Activated CD8-positive, alpha-beta T cell treated with anti-CD3 and anti-CD28 coated beads for 36 hours (primary cell): ENCODE measurements at regions of chr11 and their contacts with region 1.

Region 1: DNA sequence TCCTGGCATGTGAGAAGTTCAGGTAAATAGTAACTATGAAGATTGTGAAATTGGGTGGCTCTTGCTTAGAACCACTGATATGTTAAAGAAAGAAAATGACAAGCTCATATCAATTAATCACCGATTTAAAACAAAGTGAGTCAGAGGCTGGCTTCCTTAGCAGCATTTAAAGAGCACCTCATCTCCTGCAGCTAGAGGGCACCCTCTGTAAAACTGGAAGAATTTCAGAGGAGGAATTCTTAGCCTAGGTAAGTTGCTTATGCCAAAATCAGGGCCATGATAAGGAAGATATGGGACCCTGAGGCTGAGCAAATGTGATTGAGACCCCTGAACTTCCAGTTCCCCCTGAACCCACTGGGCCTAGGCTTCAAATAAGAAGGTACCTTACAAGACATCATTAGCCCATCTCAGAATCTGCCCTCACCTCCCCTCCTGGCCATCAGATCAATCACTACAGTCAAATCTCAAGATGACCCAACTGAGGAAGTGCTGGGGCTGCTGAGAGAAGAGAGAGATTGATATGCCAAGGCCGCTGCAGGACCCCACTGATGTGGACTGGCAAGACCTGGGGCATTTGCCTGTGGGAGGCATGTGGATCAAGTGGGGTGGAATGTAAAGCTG is 8.6 kb upstream of the CD3E start:
- DNase-seq: peak; percentile 70
- ATAC-seq: peak; percentile 77
- H3K4me3 Mint-ChIP-seq: no peak overlapping the region
- H3K27ac Mint-ChIP-seq: peak overlapping the region; percentile 36
- H3K4me1 Mint-ChIP-seq: peaks cover 19% of the 10 kb centered on the region
- H3K27me3 Mint-ChIP-seq: no peaks in the 10 kb centered on the region
- CTCF ChIP-seq: peak; percentile 78

Region 2: DNA sequence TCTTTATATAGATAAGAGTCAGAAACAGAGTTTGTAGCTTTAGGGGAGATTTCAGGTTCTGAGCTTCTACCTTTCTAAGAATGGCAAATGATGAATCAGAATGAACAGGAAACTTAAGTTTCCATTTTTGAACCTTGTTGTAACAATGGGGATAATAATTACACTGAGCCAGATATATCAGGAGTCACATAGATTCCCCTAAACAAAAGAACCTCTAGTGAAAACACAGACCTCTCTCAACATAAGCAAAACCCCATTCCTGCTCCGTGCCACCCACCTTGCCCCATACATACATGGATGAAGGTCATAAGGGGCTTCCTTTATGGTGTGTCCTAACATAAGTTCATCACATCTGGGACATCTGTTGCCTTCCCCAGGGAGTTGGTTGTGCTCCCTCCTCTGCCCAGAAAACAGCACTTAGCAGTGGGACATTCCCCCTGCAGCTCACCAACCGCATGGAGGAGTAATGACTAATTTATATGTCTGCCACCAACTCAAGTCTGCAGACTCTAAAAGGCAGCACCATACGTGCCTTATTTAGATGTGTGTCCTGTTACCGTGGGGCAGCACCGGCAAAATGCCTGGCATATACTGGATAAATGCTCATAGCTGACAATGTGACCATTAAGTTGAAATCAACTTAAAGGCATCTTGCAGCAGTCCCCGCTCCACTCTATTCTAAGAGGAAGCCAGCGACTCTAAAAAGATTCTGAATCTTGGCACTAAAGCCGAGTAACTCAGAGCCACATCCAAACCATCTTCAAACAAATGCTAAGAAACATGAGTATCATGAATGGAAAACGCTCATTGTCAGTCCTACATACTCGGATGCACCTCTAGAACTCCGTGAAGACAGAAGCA is 79.1 kb before region 1 on chr11:
- CTCF ChIA-PET with region 1: interaction called, 10 read pairs
- POLR2A ChIA-PET with region 1: interaction called, 5 read pairs
- intact Hi-C with region 1: no loop called
- DNase-seq: peak; percentile 79
- ATAC-seq: peak; percentile 70
- H3K4me3 Mint-ChIP-seq: peak overlapping the region; percentile 96
- H3K27ac Mint-ChIP-seq: peak overlapping the region; percentile 100
- H3K4me1 Mint-ChIP-seq: peaks cover 84% of the 10 kb centered on the region
- H3K27me3 Mint-ChIP-seq: no peaks in the 10 kb centered on the region
- CTCF ChIP-seq: no peak

Region 3: GRCh38 chr11:118263695-118264567 is 32.0 kb before region 1 on chr11 and contains the start of gene MPZL2:
- CTCF ChIA-PET with region 1: interaction called, 86 read pairs
- POLR2A ChIA-PET with region 1: no interaction called
- intact Hi-C with region 1: loop called (anchors 5 kb)
- DNase-seq: peak; percentile 57
- ATAC-seq: peak; percentile 79
- H3K4me3 Mint-ChIP-seq: peak within 1 kb of the TSS; percentile 81
- H3K27ac Mint-ChIP-seq: peak within 1 kb of the TSS; percentile 77
- H3K4me1 Mint-ChIP-seq: peaks cover 56% of the 10 kb centered on the region
- H3K27me3 Mint-ChIP-seq: no peaks in the 10 kb centered on the region
- CTCF ChIP-seq: no peak
- total RNA-seq, gene MPZL2: 26.2 to 31.0 TPM

Region 4: GRCh38 chr11:118311518-118311917 is 15.6 kb after region 1 on chr11:
- CTCF ChIA-PET with region 1: interaction called, 54 read pairs
- POLR2A ChIA-PET with region 1: interaction called, 7 read pairs
- intact Hi-C with region 1: no loop called
- DNase-seq: no peak
- ATAC-seq: peak; percentile 23
- H3K4me3 Mint-ChIP-seq: no peak overlapping the region
- H3K27ac Mint-ChIP-seq: peak overlapping the region; percentile 90
- H3K4me1 Mint-ChIP-seq: peaks cover 92% of the 10 kb centered on the region
- H3K27me3 Mint-ChIP-seq: no peaks in the 10 kb centered on the region
- CTCF ChIP-seq: no peak

Region 5: DNA sequence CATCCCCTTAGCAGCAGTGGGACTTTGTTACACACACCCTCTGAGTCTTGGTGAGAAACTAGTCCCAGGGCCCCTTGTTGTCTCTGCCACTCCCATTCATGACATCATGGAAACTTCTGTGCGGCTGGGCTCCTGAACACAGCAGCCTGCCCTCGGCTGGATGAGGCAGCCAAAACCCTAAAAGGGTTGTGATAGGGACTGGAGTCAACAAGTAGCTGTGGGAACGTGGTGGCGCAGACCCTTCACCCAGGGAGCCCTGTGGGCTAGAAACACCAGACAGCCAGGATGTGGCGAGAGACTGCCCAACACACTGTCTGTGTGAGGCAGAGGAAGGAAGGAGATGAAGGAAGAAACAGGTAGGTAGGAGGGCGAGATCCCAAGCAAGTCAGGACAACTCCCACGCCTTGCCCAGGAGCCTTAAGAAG is 42.7 kb after region 1 on chr11:
- CTCF ChIA-PET with region 1: interaction called, 38 read pairs
- POLR2A ChIA-PET with region 1: interaction called, 4 read pairs
- intact Hi-C with region 1: no loop called
- DNase-seq: peak; percentile 97
- ATAC-seq: peak; percentile 63
- H3K4me3 Mint-ChIP-seq: peak overlapping the region; percentile 81
- H3K27ac Mint-ChIP-seq: peak overlapping the region; percentile 96
- H3K4me1 Mint-ChIP-seq: peaks cover 39% of the 10 kb centered on the region
- H3K27me3 Mint-ChIP-seq: no peaks in the 10 kb centered on the region
- CTCF ChIP-seq: no peak

Region 6: GRCh38 chr11:118435893-118436624 is 140.1 kb after region 1 on chr11 and contains the start of gene KMT2A:
- CTCF ChIA-PET with region 1: no interaction called
- POLR2A ChIA-PET with region 1: no interaction called
- intact Hi-C with region 1: no loop called
- DNase-seq: peak; percentile 92
- ATAC-seq: peak; percentile 60
- H3K4me3 Mint-ChIP-seq: peak within 1 kb of the TSS; percentile 87
- H3K27ac Mint-ChIP-seq: peak within 1 kb of the TSS; percentile 97
- H3K4me1 Mint-ChIP-seq: peaks cover 30% of the 10 kb centered on the region
- H3K27me3 Mint-ChIP-seq: no peaks in the 10 kb centered on the region
- CTCF ChIP-seq: no peak
- total RNA-seq, gene KMT2A: 68.8 to 75.0 TPM